Naive thymus-derived CD4-positive, alpha-beta T cell (primary cell): ENCODE measurements at regions of chr2 and their contacts with region 1.

Region 1: GRCh38 chr2:230007931-230008707 is 60.6 kb downstream of the SLC16A14 start:
- DNase-seq: peak; percentile 53 to 83 (median 72)
- ATAC-seq: peak; percentile 80
- H3K4me3 ChIP-seq: no peak overlapping the region
- H3K4me3 Mint-ChIP-seq: peak overlapping the region in 9 of 10 donors; percentile 25 to 71 (median 62)
- H3K27ac ChIP-seq: no peak overlapping the region
- H3K27ac Mint-ChIP-seq: peak overlapping the region in 1 of 9 donors; percentile 0
- H3K4me1 ChIP-seq: no peaks in the 10 kb centered on the region
- H3K4me1 Mint-ChIP-seq: peaks cover 5 to 11% (median 7%) of the 10 kb centered on the region in 7 donors
- H3K27me3 ChIP-seq: no peaks in the 10 kb centered on the region
- H3K27me3 Mint-ChIP-seq: no peaks in the 10 kb centered on the region

Region 2: DNA sequence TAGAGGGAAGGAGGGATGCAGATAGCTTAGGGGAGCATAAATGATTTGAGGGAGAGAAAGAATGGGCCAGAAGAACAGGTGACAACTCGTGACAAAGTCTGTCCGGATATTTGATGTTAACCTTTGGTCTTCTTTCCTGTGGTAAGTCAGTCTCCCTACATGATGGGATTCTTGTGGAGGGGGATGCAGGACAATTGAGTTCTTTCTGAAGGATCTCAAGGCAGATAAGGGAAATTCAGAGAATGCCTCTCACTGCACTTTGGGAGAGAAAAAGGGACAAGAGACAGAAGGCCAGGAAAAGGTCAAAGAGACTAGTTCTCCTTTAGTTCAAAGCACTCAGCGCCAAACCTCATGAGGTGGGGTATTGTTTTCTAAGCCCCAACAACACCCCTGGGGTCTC is 51.6 kb before region 1 on chr2:
- CTCF ChIA-PET with region 1: no interaction called
- POLR2A ChIA-PET with region 1: no interaction called
- intact Hi-C with region 1: no loop called
- DNase-seq: no peak
- ATAC-seq: no peak
- H3K4me3 ChIP-seq: no peak overlapping the region
- H3K4me3 Mint-ChIP-seq: no peak overlapping the region
- H3K27ac ChIP-seq: no peak overlapping the region
- H3K27ac Mint-ChIP-seq: no peak overlapping the region
- H3K4me1 ChIP-seq: no peaks in the 10 kb centered on the region
- H3K4me1 Mint-ChIP-seq: peaks cover 0 to 2% (median 0%) of the 10 kb centered on the region in 7 donors
- H3K27me3 ChIP-seq: no peaks in the 10 kb centered on the region
- H3K27me3 Mint-ChIP-seq: no peaks in the 10 kb centered on the region

Region 3: GRCh38 chr2:230068016-230068650 is 60.0 kb after region 1 on chr2:
- CTCF ChIA-PET with region 1: no interaction called
- POLR2A ChIA-PET with region 1: no interaction called
- intact Hi-C with region 1: loop called (anchors 1 to 2 kb)
- DNase-seq: peak; percentile 16 to 62 (median 38)
- ATAC-seq: peak; percentile 40
- H3K4me3 ChIP-seq: peak overlapping the region; percentile 62
- H3K4me3 Mint-ChIP-seq: peak overlapping the region; percentile 81 to 96 (median 90)
- H3K27ac ChIP-seq: no peak overlapping the region
- H3K27ac Mint-ChIP-seq: peak overlapping the region in 3 of 9 donors; percentile 69 to 80 (median 74)
- H3K4me1 ChIP-seq: peaks cover 0 to 7% of the 10 kb centered on the region in 2 donors
- H3K4me1 Mint-ChIP-seq: peaks cover 8 to 18% (median 12%) of the 10 kb centered on the region in 7 donors
- H3K27me3 ChIP-seq: no peaks in the 10 kb centered on the region
- H3K27me3 Mint-ChIP-seq: peaks cover 4 to 32% (median 5%) of the 10 kb centered on the region in 5 donors

Region 4: DNA sequence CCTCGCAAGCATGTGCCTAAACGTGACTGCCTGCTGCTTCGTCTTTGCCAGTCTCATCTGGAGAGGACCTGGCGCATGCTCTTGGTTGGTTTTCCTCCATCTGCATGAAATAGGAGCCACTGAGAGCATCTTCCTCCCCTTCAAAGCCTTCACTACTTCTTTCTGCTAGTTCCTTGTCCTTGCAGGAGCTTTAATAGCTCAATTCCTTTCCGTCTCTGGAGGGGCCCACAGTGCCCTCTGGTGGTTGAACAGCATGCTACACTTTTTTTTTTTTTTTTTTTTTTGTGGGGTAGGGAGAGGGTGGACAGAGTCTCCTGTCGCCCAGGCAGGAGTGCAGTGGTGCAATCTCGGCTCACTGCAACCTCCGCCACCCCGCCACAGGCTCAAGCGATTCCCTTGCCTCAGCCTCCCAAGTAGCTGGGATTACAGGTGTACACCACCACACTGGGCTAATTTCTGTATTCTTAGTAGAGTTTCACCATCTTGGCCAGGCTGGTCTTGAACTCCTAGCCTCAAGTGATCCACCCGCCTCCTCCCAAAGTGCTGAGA is 152.1 kb after region 1 on chr2:
- CTCF ChIA-PET with region 1: interaction called, 16 read pairs
- POLR2A ChIA-PET with region 1: no interaction called
- intact Hi-C with region 1: loop called (anchors 1 kb)
- DNase-seq: peak; percentile 15 to 60 (median 52)
- ATAC-seq: peak; percentile 82
- H3K4me3 ChIP-seq: no peak overlapping the region
- H3K4me3 Mint-ChIP-seq: peak overlapping the region in 7 of 10 donors; percentile 35 to 68 (median 44)
- H3K27ac ChIP-seq: no peak overlapping the region
- H3K27ac Mint-ChIP-seq: peak overlapping the region in 2 of 9 donors; percentile 33 to 34
- H3K4me1 ChIP-seq: no peaks in the 10 kb centered on the region
- H3K4me1 Mint-ChIP-seq: peaks cover 6 to 11% (median 6%) of the 10 kb centered on the region in 7 donors
- H3K27me3 ChIP-seq: no peaks in the 10 kb centered on the region
- H3K27me3 Mint-ChIP-seq: no peaks in the 10 kb centered on the region

Region 5: GRCh38 chr2:230668184-230668938 is 660.2 kb after region 1 on chr2:
- CTCF ChIA-PET with region 1: no interaction called
- POLR2A ChIA-PET with region 1: no interaction called
- intact Hi-C with region 1: no loop called
- DNase-seq: peak in 1 of 9 donors; percentile 54
- ATAC-seq: peak; percentile 55
- H3K4me3 ChIP-seq: no peak overlapping the region
- H3K4me3 Mint-ChIP-seq: peak overlapping the region in 5 of 10 donors; percentile 7 to 53 (median 45)
- H3K27ac ChIP-seq: no peak overlapping the region
- H3K27ac Mint-ChIP-seq: peak overlapping the region in 3 of 9 donors; percentile 10 to 89 (median 55)
- H3K4me1 ChIP-seq: peaks cover 38 to 50% of the 10 kb centered on the region in 2 donors
- H3K4me1 Mint-ChIP-seq: peaks cover 43 to 78% (median 64%) of the 10 kb centered on the region in 7 donors
- H3K27me3 ChIP-seq: no peaks in the 10 kb centered on the region
- H3K27me3 Mint-ChIP-seq: no peaks in the 10 kb centered on the region

Region 6: GRCh38 chr2:230814616-230815015 is 806.5 kb after region 1 on chr2:
- CTCF ChIA-PET with region 1: no interaction called
- POLR2A ChIA-PET with region 1: no interaction called
- intact Hi-C with region 1: loop called in 1 of 2 experiments (anchors 1 kb)
- DNase-seq: no peak
- ATAC-seq: no peak
- H3K4me3 ChIP-seq: no peak overlapping the region
- H3K4me3 Mint-ChIP-seq: no peak overlapping the region
- H3K27ac ChIP-seq: no peak overlapping the region
- H3K27ac Mint-ChIP-seq: peak overlapping the region in 7 of 9 donors; percentile 12 to 76 (median 70)
- H3K4me1 ChIP-seq: no peaks in the 10 kb centered on the region
- H3K4me1 Mint-ChIP-seq: peaks cover 0 to 36% (median 19%) of the 10 kb centered on the region in 7 donors
- H3K27me3 ChIP-seq: no peaks in the 10 kb centered on the region
- H3K27me3 Mint-ChIP-seq: no peaks in the 10 kb centered on the region